Colonic mucosa (tissue), 4 donors: ENCODE measurements at regions of chr12 and their contacts with region 1.

Region 1: GRCh38 chr12:114508529-114509129 is 102.7 kb upstream of the TBX5 start:
- DNase-seq: peak; percentile 61
- H3K4me3 ChIP-seq: no peak overlapping the region
- H3K27ac ChIP-seq: no peak overlapping the region
- H3K4me1 ChIP-seq: no peaks in the 10 kb centered on the region
- H3K27me3 ChIP-seq: no peaks in the 10 kb centered on the region
- CTCF ChIP-seq: peak; percentile 70

Region 2: DNA sequence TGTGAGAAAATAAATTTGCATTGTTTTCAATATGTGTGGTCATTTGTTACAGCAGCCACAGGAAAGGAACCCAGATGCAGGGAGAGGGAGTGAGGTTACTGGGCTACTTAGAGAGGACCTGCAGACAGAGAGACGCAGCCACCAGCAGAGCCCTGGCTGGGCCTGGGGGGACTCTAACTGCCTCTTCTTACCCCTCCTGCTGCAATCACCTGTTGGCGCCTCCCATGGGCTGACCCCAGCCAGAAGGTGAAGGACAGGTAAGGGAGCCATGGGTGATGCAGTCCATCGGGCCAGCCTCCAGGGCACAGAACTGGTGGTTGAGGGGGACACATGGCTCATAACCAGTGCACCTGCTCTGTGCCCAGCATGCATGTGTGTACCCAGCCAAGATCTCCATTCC is 526.8 kb before region 1 on chr12:
- intact Hi-C with region 1: loop called (anchors 2 kb)
- DNase-seq: no peak
- H3K4me3 ChIP-seq: no peak overlapping the region
- H3K27ac ChIP-seq: no peak overlapping the region
- H3K4me1 ChIP-seq: no peaks in the 10 kb centered on the region
- H3K27me3 ChIP-seq: no peaks in the 10 kb centered on the region
- CTCF ChIP-seq: no peak

Region 3: DNA sequence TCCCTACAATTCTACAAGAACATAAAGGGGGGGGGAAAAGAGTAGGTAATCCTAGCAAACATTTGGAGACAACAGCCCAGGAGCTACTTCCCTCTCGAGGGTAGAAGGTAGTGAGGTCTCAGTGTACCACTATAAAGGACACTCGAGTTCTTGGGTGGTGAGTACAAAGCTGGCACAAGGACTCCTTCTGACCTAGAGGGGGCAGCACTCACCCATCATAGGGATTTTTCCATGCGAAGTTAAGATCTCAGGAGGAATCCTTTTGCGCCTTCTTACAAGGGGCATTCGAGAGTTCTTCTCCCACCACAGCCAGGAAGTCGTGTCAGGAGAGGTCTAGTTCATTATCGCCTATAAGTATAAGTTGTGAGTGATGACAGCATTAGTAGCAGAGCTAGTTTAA is 342.3 kb before region 1 on chr12:
- intact Hi-C with region 1: loop called (anchors 5 kb)
- DNase-seq: no peak
- H3K4me3 ChIP-seq: no peak overlapping the region
- H3K27ac ChIP-seq: no peak overlapping the region
- H3K4me1 ChIP-seq: no peaks in the 10 kb centered on the region
- H3K27me3 ChIP-seq: no peaks in the 10 kb centered on the region
- CTCF ChIP-seq: peak; percentile 15

Region 4: DNA sequence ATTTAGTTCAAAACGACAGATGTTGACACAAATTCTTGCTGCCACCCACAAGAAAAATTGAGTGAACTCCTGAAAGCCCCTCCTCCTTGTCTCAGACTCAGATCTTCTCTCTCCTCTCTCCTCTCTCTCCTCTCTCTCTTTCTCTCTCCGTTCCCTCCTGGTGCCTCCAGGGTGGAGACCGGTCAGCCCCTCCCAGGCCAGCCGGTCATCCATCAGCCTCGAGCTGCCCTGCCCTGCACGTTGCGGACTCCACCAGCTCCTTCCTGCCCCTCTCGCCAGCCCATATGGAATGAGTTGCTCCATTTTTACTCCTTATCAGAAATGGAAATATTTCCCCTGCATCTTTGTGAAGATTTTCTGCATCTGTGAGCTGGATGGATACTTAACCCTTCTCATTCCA is 206.5 kb before region 1 on chr12:
- intact Hi-C with region 1: no loop called
- DNase-seq: no peak
- H3K4me3 ChIP-seq: no peak overlapping the region
- H3K27ac ChIP-seq: no peak overlapping the region
- H3K4me1 ChIP-seq: no peaks in the 10 kb centered on the region
- H3K27me3 ChIP-seq: no peaks in the 10 kb centered on the region
- CTCF ChIP-seq: no peak